ENCODE measurements at regions of chr11 and their contacts with region 1.

Region 1: DNA sequence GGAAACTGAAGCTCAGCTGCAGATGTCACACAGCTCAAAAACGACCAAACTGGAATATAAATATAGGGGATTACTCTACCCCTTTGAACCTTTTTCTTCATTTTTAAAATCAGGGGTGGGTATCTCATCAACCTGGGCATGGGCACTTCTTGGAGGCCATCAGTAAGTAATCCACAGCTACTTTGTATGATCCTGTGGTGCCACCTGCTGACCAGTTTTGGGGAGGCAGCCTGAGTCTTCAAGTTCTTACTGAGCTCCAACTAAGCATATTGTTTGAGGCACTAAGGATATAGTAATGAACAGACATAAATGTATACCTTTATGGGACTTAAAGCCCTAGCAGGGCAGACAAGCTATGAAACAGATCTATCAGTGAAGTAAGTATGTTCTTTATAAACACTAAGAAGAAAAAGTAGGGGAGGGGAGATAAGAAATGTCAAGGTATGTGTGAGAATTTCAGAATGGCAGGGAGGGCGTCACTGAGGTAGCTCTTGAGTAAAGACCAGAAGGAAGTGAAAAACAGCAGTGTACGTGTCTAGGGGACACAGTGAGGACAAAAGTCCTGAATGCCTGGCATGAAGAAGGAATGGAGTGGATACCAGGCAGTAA is 18.4 kb downstream of the TUB start:
- DNase-seq: peak; percentile 77
- ATAC-seq: peak; percentile 74
- H3K4me3 Mint-ChIP-seq: no peak overlapping the region
- H3K27ac Mint-ChIP-seq: no peak overlapping the region
- H3K4me1 Mint-ChIP-seq: no peaks in the 10 kb centered on the region
- H3K27me3 Mint-ChIP-seq: no peaks in the 10 kb centered on the region

Region 2: GRCh38 chr11:7520981-7521487 is 578.4 kb before region 1 on chr11:
- CTCF ChIA-PET with region 1: no interaction called
- POLR2A ChIA-PET with region 1: no interaction called
- DNase-seq: no peak
- ATAC-seq: peak; percentile 71
- H3K4me3 Mint-ChIP-seq: no peak overlapping the region
- H3K27ac Mint-ChIP-seq: no peak overlapping the region
- H3K4me1 Mint-ChIP-seq: peaks cover 31% of the 10 kb centered on the region
- H3K27me3 Mint-ChIP-seq: peaks cover 6% of the 10 kb centered on the region

Region 3: GRCh38 chr11:7892840-7893254 is 206.5 kb before region 1 on chr11:
- CTCF ChIA-PET with region 1: interaction called, 11 read pairs
- POLR2A ChIA-PET with region 1: no interaction called
- DNase-seq: no peak
- ATAC-seq: peak; percentile 61
- H3K4me3 Mint-ChIP-seq: no peak overlapping the region
- H3K27ac Mint-ChIP-seq: no peak overlapping the region
- H3K4me1 Mint-ChIP-seq: peaks cover 3% of the 10 kb centered on the region
- H3K27me3 Mint-ChIP-seq: peaks cover 5% of the 10 kb centered on the region

Region 4: GRCh38 chr11:7986768-7987559 is 112.4 kb before region 1 on chr11 and contains the start of gene EIF3F:
- CTCF ChIA-PET with region 1: interaction called, 16 read pairs
- POLR2A ChIA-PET with region 1: no interaction called
- DNase-seq: peak; percentile 96
- ATAC-seq: peak; percentile 99
- H3K4me3 Mint-ChIP-seq: peak within 1 kb of the TSS; percentile 94
- H3K27ac Mint-ChIP-seq: peak within 1 kb of the TSS; percentile 94
- H3K4me1 Mint-ChIP-seq: peaks cover 35% of the 10 kb centered on the region
- H3K27me3 Mint-ChIP-seq: no peaks in the 10 kb centered on the region
- total RNA-seq, gene EIF3F: 212 to 222 TPM

Region 5: DNA sequence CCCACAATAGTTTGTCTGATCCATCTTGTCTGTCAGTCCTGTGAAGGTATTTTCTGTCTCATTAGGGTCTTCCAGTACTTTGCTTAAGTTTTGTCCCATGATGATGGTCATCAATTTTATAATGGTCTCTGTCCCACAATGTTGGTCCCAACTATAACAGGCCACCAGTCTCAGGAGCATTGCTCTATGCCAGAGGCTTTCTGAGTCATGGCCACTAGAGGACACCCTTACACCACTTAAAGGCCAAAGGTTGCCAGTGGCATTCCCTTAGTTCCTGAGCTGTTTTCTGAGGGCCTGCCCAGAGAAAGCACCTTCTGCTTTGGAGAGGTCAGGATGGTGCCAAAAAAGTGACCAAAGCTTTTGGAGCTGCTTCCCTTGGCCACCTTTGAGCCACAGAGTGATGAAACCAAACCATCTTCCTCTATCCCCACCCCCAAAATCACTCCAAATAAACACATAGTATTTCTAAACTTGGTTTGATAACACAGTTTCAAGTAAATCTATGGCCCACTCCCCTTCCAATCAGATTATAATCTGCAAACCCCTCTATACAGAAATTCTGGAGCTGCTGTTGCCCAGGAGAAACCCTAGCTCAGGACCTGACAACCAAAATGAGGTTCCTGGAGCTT is 92.9 kb before region 1 on chr11:
- CTCF ChIA-PET with region 1: interaction called, 152 read pairs
- POLR2A ChIA-PET with region 1: interaction called, 5 read pairs
- DNase-seq: peak; percentile 49
- ATAC-seq: peak; percentile 66
- H3K4me3 Mint-ChIP-seq: no peak overlapping the region
- H3K27ac Mint-ChIP-seq: no peak overlapping the region
- H3K4me1 Mint-ChIP-seq: no peaks in the 10 kb centered on the region
- H3K27me3 Mint-ChIP-seq: no peaks in the 10 kb centered on the region

Region 6: DNA sequence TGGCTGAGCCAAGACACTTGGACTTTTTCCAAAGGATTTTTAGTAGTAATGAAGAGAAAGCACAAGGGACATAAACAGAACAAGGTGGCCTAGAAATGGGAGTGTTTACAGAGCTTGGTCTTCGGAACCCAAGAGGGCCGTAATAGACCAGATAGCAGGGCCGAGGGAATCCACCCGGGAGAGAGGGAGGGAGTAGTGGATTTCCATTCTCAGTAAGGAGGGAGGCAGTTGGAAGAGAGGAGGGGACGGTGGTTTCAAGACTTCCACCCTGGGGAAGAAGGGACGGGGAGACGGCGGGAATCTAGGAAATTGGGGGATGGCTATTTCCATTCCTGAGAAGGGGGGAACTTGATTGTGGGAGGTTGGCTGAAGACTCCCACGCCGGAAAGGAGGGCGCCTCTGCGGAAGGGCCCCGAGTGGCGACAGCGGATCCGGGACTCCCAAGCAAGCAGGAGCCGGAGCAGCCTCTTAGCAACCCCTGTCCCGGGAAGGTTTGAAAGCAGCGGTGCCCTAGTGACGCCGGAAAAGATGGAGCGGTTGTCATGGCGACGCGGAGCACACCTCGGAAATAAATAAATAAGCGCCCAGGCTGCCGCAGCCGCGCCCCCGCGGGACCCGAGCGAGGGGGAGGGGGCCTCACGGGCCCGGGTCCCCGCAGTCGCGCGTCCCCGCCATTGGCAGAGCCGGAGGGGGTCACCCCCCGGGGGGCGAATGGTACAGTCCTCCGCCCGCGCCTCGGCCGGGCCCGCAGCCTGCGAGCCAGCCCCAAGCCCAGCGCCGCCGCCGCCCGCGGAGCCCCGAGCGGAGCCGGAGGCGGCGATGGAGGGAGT is 80.7 kb before region 1 on chr11:
- CTCF ChIA-PET with region 1: interaction called, 22 read pairs
- POLR2A ChIA-PET with region 1: no interaction called
- DNase-seq: peak; percentile 75
- ATAC-seq: peak; percentile 85
- H3K4me3 Mint-ChIP-seq: peak overlapping the region; percentile 42
- H3K27ac Mint-ChIP-seq: peak overlapping the region; percentile 5
- H3K4me1 Mint-ChIP-seq: peaks cover 11% of the 10 kb centered on the region
- H3K27me3 Mint-ChIP-seq: peaks cover 53% of the 10 kb centered on the region

Region 7: DNA sequence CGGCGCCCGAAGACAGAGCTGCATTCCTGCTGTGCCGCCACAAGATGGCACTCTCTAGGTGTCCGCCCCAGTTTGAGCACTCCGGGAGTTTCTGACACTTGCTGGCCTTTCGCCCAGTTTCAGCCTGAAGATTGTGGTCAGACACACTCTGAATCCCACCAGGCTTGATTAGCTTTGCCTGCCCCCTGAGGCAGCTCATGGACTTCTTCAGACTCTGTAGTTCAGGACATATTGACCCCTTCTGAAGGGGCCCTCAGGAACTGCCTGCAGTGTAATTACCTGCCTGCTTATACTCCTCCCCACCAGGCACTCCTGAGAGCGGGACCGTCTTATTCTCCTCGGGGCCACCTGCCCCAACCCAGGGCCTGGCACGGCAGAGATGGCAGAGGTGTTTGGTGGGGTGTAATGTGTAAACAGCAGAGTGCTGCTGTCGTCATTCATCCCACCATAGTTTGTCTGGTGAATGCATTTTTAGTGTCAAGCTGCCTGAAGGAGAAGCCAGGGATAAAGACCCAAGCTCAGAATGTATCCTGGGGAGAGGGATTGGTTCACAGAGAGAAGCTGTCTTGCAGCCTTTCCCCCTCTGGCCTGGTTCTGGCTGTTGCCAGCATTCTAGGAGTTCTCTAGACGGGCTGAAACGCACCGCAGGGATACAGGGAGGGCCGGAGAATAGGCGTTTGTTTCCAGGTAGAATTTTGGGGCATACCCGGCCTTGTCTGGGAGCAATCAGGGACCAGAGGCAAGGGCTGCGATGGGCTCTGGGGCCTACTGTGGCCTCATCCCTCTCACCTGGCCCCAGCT is 65.9 kb before region 1 on chr11:
- CTCF ChIA-PET with region 1: interaction called, 93 read pairs
- POLR2A ChIA-PET with region 1: no interaction called
- DNase-seq: peak; percentile 53
- ATAC-seq: peak; percentile 83
- H3K4me3 Mint-ChIP-seq: no peak overlapping the region
- H3K27ac Mint-ChIP-seq: no peak overlapping the region
- H3K4me1 Mint-ChIP-seq: peaks cover 2% of the 10 kb centered on the region
- H3K27me3 Mint-ChIP-seq: peaks cover 11% of the 10 kb centered on the region

Region 8: GRCh38 chr11:8111636-8112035 is 12.2 kb after region 1 on chr11:
- CTCF ChIA-PET with region 1: interaction called, 19 read pairs
- POLR2A ChIA-PET with region 1: no interaction called
- DNase-seq: no peak
- ATAC-seq: no peak
- H3K4me3 Mint-ChIP-seq: no peak overlapping the region
- H3K27ac Mint-ChIP-seq: no peak overlapping the region
- H3K4me1 Mint-ChIP-seq: no peaks in the 10 kb centered on the region
- H3K27me3 Mint-ChIP-seq: no peaks in the 10 kb centered on the region

Measured in activated CD8-positive, alpha-beta T cell treated with anti-CD3 and anti-CD28 coated beads, Interleukin-2, amount 10 ng/mL, durations not matched to agents 7 days and 5 days (primary cell).